Adrenal gland (tissue), 19 donors: ENCODE measurements at regions of chr6 and their contacts with region 1.

Region 1: DNA sequence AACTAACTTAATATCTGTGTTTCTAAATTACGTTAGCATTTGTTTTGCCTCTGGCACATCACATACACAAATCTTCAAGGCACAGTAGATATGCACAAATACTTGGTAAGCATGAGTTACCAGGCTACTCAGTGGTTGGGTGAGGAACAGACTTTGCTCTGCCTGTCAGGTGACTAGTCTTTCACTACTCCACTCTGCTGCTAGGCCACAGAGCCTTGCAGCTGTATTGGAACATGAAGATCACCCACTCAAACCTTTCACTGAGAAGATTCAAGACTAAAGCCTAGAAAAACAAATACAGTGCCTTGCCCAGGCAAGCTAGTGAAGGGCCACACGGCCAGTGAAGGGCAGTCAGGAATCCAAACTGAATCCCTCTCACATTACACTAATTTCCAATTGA is 47.0 kb downstream of the DTNBP1 start:
- DNase-seq: no peak
- H3K4me3 ChIP-seq: no peak overlapping the region
- H3K27ac ChIP-seq: no peak overlapping the region
- H3K4me1 ChIP-seq: peaks cover 0 to 3% of the 10 kb centered on the region in 2 donors
- H3K27me3 ChIP-seq: no peaks in the 10 kb centered on the region
- CTCF ChIP-seq: no peak
- POLR2A ChIP-seq: no peak

Region 2: GRCh38 chr6:15512126-15512525 is 103.7 kb before region 1 on chr6:
- intact Hi-C with region 1: loop called in 1 of 2 experiments (anchors 10 kb)
- DNase-seq: peak in 5 of 7 donors; percentile 40 to 73 (median 47)
- H3K4me3 ChIP-seq: no peak overlapping the region
- H3K27ac ChIP-seq: peak overlapping the region in 2 of 5 donors; percentile 17 to 24
- H3K4me1 ChIP-seq: peaks cover 0 to 13% of the 10 kb centered on the region in 2 donors
- H3K27me3 ChIP-seq: no peaks in the 10 kb centered on the region
- CTCF ChIP-seq: peak in 5 of 6 experiments; percentile 4 to 35 (median 26)
- POLR2A ChIP-seq: no peak

Region 3: DNA sequence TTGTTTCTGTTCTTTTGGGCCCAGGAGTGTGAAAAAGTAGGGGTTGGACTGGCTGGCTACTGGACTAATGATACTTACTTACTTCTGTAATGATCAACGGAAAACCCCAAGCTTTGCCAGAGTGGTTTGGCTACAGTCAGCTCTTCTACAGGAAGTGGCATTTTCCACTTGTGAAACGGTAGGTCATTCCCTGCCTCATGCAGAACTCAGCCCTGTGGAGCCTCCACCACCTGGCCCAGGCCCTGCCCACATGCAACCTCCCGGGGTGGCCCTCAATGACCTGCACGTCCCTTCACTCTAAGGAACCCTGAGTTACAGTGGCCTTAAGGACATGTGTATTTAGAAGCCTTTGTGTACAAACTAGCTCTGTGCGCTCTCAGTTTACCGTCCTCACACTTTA is 93.4 kb before region 1 on chr6:
- intact Hi-C with region 1: loop called (anchors 10 kb)
- DNase-seq: peak in 4 of 7 donors; percentile 11 to 50 (median 20)
- H3K4me3 ChIP-seq: no peak overlapping the region
- H3K27ac ChIP-seq: no peak overlapping the region
- H3K4me1 ChIP-seq: no peaks in the 10 kb centered on the region
- H3K27me3 ChIP-seq: no peaks in the 10 kb centered on the region
- CTCF ChIP-seq: no peak
- POLR2A ChIP-seq: no peak